Activated B cell treated with CpG ODN at 0.5 μM for 24 hours (primary cell): ENCODE measurements at regions of chr6 and their contacts with region 1.

Region 1: DNA sequence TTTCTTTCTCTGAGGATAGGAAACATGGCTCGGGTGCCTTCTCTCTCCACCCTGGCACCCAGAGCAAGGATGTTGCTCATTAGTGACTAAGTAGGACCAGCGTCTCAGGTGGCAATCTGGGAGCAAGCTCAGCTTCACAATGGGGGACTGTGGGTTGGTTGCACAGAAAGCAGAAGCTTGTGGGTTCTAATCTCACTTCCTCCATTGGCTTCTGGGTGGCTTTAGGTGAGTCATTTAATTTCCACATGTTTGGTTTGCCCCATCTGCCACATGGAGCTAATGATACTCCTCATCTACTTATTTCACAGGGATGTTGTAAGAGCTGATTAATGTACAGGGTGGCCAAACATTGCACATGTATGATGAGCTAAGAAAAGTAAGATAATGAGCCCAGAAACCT is 54.8 kb upstream of the AKIRIN2 start:
- DNase-seq: peak; percentile 41
- ATAC-seq: peak; percentile 91
- H3K4me3 Mint-ChIP-seq: peak overlapping the region; percentile 46
- H3K27ac Mint-ChIP-seq: peak overlapping the region; percentile 91
- H3K4me1 Mint-ChIP-seq: peaks cover 42% of the 10 kb centered on the region
- H3K27me3 Mint-ChIP-seq: no peaks in the 10 kb centered on the region
- CTCF ChIP-seq: no peak

Region 2: DNA sequence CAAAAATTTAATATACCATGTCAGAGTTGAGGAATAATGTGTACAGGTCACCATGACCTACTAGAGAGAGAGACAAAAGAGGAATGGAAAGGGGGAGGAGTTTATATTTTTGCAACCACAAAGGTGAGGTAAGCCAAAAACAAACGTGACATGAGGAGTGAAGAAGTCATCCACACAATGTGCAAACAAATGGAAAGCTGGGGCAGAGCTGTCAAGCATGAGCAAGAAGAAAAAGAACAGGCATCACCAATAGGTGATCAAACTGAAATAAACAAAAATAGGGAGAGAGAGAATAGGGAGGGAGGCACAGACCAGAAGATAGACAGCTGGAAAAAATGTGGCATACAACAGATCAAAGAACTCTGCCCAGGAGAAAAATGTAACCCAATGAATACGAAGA is 182.6 kb before region 1 on chr6:
- CTCF ChIA-PET with region 1: no interaction called
- POLR2A ChIA-PET with region 1: no interaction called
- intact Hi-C with region 1: no loop called
- DNase-seq: no peak
- ATAC-seq: no peak
- H3K4me3 Mint-ChIP-seq: no peak overlapping the region
- H3K27ac Mint-ChIP-seq: no peak overlapping the region
- H3K4me1 Mint-ChIP-seq: peaks cover 43% of the 10 kb centered on the region
- H3K27me3 Mint-ChIP-seq: no peaks in the 10 kb centered on the region
- CTCF ChIP-seq: no peak

Region 3: GRCh38 chr6:87723170-87724078 is 33.4 kb before region 1 on chr6:
- CTCF ChIA-PET with region 1: no interaction called
- POLR2A ChIA-PET with region 1: interaction called, 9 read pairs
- intact Hi-C with region 1: loop called (anchors 2 kb)
- DNase-seq: no peak
- ATAC-seq: no peak
- H3K4me3 Mint-ChIP-seq: no peak overlapping the region
- H3K27ac Mint-ChIP-seq: no peak overlapping the region
- H3K4me1 Mint-ChIP-seq: peaks cover 32% of the 10 kb centered on the region
- H3K27me3 Mint-ChIP-seq: no peaks in the 10 kb centered on the region
- CTCF ChIP-seq: no peak

Region 4: GRCh38 chr6:87742106-87742505 is 14.8 kb before region 1 on chr6:
- CTCF ChIA-PET with region 1: no interaction called
- POLR2A ChIA-PET with region 1: interaction called, 11 read pairs
- intact Hi-C with region 1: loop called (anchors 2 kb)
- DNase-seq: peak; percentile 21
- ATAC-seq: peak; percentile 89
- H3K4me3 Mint-ChIP-seq: peak overlapping the region; percentile 15
- H3K27ac Mint-ChIP-seq: peak overlapping the region; percentile 79
- H3K4me1 Mint-ChIP-seq: peaks cover 21% of the 10 kb centered on the region
- H3K27me3 Mint-ChIP-seq: no peaks in the 10 kb centered on the region
- CTCF ChIP-seq: no peak

Region 5: DNA sequence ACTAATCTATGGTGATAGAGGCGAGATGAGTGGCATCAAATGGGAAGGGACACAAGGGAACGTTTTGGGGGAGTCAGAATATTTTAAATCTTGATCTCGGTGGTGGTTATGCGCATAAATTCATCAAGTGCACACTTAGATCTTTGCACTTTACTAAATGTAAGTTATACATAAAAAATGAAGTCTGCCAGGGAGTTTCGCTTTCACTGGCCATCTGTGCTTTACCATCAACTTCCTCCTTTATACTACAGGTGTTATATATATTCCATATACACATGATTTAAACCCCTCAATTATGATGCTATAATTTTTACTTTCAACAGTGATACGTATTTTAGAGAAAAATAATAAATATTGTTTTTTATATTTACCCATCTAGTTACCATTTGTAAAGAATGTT is 42.8 kb after region 1 on chr6:
- CTCF ChIA-PET with region 1: no interaction called
- POLR2A ChIA-PET with region 1: interaction called, 4 read pairs
- intact Hi-C with region 1: loop called (anchors 2 kb)
- DNase-seq: no peak
- ATAC-seq: peak; percentile 48
- H3K4me3 Mint-ChIP-seq: peak overlapping the region; percentile 3
- H3K27ac Mint-ChIP-seq: peak overlapping the region; percentile 2
- H3K4me1 Mint-ChIP-seq: peaks cover 54% of the 10 kb centered on the region
- H3K27me3 Mint-ChIP-seq: no peaks in the 10 kb centered on the region
- CTCF ChIP-seq: no peak

Region 6: DNA sequence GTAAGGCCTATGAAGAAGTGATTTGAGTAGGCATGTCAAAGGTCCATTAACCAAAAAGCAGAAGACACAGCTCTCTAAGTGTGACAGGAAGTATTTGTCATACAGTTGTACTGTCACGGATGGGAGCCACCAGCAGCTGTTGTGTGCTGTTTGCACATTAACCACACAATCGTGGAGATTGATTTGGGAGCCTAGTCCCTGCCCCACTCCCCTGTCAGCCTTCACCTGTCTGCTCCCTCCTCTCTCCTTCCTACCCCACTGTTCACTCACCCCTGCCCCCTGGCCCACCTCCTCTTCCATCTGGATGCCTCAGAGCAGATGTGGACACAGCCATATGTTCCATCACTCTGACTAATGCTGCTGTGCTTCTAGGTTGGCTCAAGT is 166.1 kb after region 1 on chr6:
- CTCF ChIA-PET with region 1: no interaction called
- POLR2A ChIA-PET with region 1: interaction called, 7 read pairs
- intact Hi-C with region 1: loop called (anchors 1 kb)
- DNase-seq: peak; percentile 39
- ATAC-seq: peak; percentile 81
- H3K4me3 Mint-ChIP-seq: peak overlapping the region; percentile 33
- H3K27ac Mint-ChIP-seq: peak overlapping the region; percentile 88
- H3K4me1 Mint-ChIP-seq: peaks cover 87% of the 10 kb centered on the region
- H3K27me3 Mint-ChIP-seq: no peaks in the 10 kb centered on the region
- CTCF ChIP-seq: no peak

Region 7: GRCh38 chr6:88141561-88142296 is 384.9 kb after region 1 on chr6:
- CTCF ChIA-PET with region 1: interaction called, 3 read pairs
- POLR2A ChIA-PET with region 1: no interaction called
- intact Hi-C with region 1: loop called (anchors 2 kb)
- DNase-seq: peak; percentile 33
- ATAC-seq: peak; percentile 91
- H3K4me3 Mint-ChIP-seq: peak overlapping the region; percentile 73
- H3K27ac Mint-ChIP-seq: peak overlapping the region; percentile 96
- H3K4me1 Mint-ChIP-seq: peaks cover 65% of the 10 kb centered on the region
- H3K27me3 Mint-ChIP-seq: no peaks in the 10 kb centered on the region
- CTCF ChIP-seq: no peak

Region 8: DNA sequence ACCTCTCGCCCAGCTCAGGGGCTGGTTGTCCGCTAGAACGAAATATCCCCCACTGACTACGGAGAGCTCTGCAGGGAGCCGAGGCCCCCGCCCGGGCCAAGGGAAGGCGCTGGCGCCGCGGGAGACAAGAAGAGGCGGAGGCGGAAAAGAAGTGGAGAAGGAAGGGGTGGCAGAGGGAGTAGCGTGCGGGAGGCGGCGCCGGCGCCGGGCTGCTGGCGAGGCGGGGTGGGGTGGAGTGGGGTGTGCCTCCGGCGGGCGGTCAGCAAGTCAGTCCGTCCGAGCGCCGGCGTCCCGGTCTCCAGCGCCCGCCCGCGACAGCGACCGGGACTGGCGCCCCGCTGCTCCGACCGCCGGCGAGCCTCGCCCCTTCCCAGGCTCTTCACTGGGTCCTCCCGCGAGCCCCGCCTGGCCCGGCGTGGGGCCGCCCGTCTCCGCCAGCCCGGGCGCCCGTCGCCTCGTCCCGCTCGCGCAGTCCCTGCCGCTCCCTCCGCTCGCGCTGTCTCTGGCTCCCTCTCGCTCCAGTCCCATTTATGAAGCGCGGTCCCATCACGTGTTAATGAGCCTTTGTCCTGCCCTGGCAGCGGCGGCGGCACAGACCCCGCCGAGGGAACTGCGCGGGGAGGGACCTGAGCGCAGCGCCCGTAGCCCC is 409.1 kb after region 1 on chr6 and contains the start of gene CNR1:
- CTCF ChIA-PET with region 1: no interaction called
- POLR2A ChIA-PET with region 1: no interaction called
- intact Hi-C with region 1: loop called (anchors 5 kb)
- DNase-seq: no peak
- ATAC-seq: peak; percentile 59
- H3K4me3 Mint-ChIP-seq: peak within 1 kb of the TSS; percentile 91
- H3K27ac Mint-ChIP-seq: peak within 1 kb of the TSS; percentile 87
- H3K4me1 Mint-ChIP-seq: peaks cover 34% of the 10 kb centered on the region
- H3K27me3 Mint-ChIP-seq: peaks cover 15% of the 10 kb centered on the region
- CTCF ChIP-seq: no peak
- total RNA-seq, gene CNR1: 2.7 and 4.4 TPM in 2 replicates